Activated CD4-positive, alpha-beta T cell treated with anti-CD3 and anti-CD28 coated beads for 36 hours (primary cell): ENCODE measurements at regions of chr10 and their contacts with region 1.

Region 1: DNA sequence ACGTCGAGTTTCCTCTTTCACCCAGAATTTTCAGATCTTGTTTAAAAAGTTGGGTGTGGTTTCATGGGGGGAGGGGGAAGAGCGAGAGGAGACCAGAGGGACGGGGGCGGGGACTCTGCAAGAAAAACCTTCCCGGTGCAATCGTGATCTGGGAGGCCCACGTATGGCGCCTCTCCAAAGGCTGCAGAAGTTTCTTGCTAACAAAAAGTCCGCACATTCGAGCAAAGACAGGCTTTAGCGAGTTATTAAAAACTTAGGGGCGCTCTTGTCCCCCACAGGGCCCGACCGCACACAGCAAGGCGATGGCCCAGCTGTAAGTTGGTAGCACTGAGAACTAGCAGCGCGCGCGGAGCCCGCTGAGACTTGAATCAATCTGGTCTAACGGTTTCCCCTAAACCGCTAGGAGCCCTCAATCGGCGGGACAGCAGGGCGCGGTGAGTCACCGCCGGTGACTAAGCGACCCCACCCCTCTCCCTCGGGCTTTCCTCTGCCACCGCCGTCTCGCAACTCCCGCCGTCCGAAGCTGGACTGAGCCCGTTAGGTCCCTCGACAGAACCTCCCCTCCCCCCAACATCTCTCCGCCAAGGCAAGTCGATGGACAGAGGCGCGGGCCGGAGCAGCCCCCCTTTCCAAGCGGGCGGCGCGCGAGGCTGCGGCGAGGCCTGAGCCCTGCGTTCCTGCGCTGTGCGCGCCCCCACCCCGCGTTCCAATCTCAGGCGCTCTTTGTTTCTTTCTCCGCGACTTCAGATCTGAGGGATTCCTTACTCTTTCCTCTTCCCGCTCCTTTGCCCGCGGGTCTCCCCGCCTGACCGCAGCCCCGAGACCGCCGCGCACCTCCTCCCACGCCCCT is at the start of gene VIM:
- DNase-seq: peak; percentile 93
- ATAC-seq: peak; percentile 47
- H3K4me3 Mint-ChIP-seq: peak within 1 kb of the TSS; percentile 82
- H3K27ac Mint-ChIP-seq: peak within 1 kb of the TSS; percentile 90
- H3K4me1 Mint-ChIP-seq: peaks cover 41% of the 10 kb centered on the region
- H3K27me3 Mint-ChIP-seq: peaks cover 1% of the 10 kb centered on the region
- total RNA-seq, gene VIM: 334 to 396 TPM

Region 2: GRCh38 chr10:16436758-16437539 is 791.4 kb before region 1 on chr10 and contains the start of gene PTER:
- CTCF ChIA-PET with region 1: no interaction called
- POLR2A ChIA-PET with region 1: no interaction called
- intact Hi-C with region 1: loop called in 1 of 2 experiments (anchors 5 kb)
- DNase-seq: peak; percentile 99
- ATAC-seq: peak; percentile 99
- H3K4me3 Mint-ChIP-seq: peak within 1 kb of the TSS; percentile 89
- H3K27ac Mint-ChIP-seq: peak within 1 kb of the TSS; percentile 92
- H3K4me1 Mint-ChIP-seq: peaks cover 39% of the 10 kb centered on the region
- H3K27me3 Mint-ChIP-seq: no peaks in the 10 kb centered on the region
- total RNA-seq, gene PTER: 33.1 to 34.5 TPM

Region 3: GRCh38 chr10:16891375-16892313 is 336.7 kb before region 1 on chr10:
- CTCF ChIA-PET with region 1: no interaction called
- POLR2A ChIA-PET with region 1: interaction called, 13 read pairs
- intact Hi-C with region 1: loop called (anchors 1 kb)
- DNase-seq: peak; percentile 72
- ATAC-seq: peak; percentile 96
- H3K4me3 Mint-ChIP-seq: peak overlapping the region; percentile 56
- H3K27ac Mint-ChIP-seq: peak overlapping the region; percentile 48
- H3K4me1 Mint-ChIP-seq: peaks cover 13% of the 10 kb centered on the region
- H3K27me3 Mint-ChIP-seq: no peaks in the 10 kb centered on the region

Region 4: GRCh38 chr10:17023386-17024298 is 204.7 kb before region 1 on chr10:
- CTCF ChIA-PET with region 1: interaction called, 5 read pairs
- POLR2A ChIA-PET with region 1: interaction called, 6 read pairs
- intact Hi-C with region 1: loop called (anchors 1 kb)
- DNase-seq: peak; percentile 89
- ATAC-seq: peak; percentile 66
- H3K4me3 Mint-ChIP-seq: peak overlapping the region; percentile 50
- H3K27ac Mint-ChIP-seq: peak overlapping the region; percentile 95
- H3K4me1 Mint-ChIP-seq: peaks cover 62% of the 10 kb centered on the region
- H3K27me3 Mint-ChIP-seq: no peaks in the 10 kb centered on the region

Region 5: GRCh38 chr10:17175551-17175950 is 52.8 kb before region 1 on chr10:
- CTCF ChIA-PET with region 1: no interaction called
- POLR2A ChIA-PET with region 1: no interaction called
- intact Hi-C with region 1: loop called in 1 of 2 experiments (anchors 2 kb)
- DNase-seq: peak; percentile 19
- ATAC-seq: peak; percentile 64
- H3K4me3 Mint-ChIP-seq: peak overlapping the region; percentile 56
- H3K27ac Mint-ChIP-seq: peak overlapping the region; percentile 43
- H3K4me1 Mint-ChIP-seq: peaks cover 20% of the 10 kb centered on the region
- H3K27me3 Mint-ChIP-seq: no peaks in the 10 kb centered on the region

Region 6: GRCh38 chr10:17206210-17206709 is 22.1 kb before region 1 on chr10:
- CTCF ChIA-PET with region 1: interaction called, 18 read pairs
- POLR2A ChIA-PET with region 1: interaction called, 26 read pairs
- intact Hi-C with region 1: loop called (anchors 1 kb)
- DNase-seq: peak; percentile 60
- ATAC-seq: peak; percentile 92
- H3K4me3 Mint-ChIP-seq: peak overlapping the region; percentile 53
- H3K27ac Mint-ChIP-seq: peak overlapping the region; percentile 95
- H3K4me1 Mint-ChIP-seq: peaks cover 52% of the 10 kb centered on the region
- H3K27me3 Mint-ChIP-seq: no peaks in the 10 kb centered on the region

Region 7: GRCh38 chr10:17257466-17258321 is 29.4 kb after region 1 on chr10:
- CTCF ChIA-PET with region 1: interaction called, 3 read pairs
- POLR2A ChIA-PET with region 1: interaction called, 3 read pairs
- intact Hi-C with region 1: loop called in 1 of 2 experiments (anchors 2 kb)
- DNase-seq: peak; percentile 66
- ATAC-seq: peak; percentile 86
- H3K4me3 Mint-ChIP-seq: peak overlapping the region; percentile 9
- H3K27ac Mint-ChIP-seq: peak overlapping the region; percentile 0
- H3K4me1 Mint-ChIP-seq: peaks cover 7% of the 10 kb centered on the region
- H3K27me3 Mint-ChIP-seq: peaks cover 3% of the 10 kb centered on the region